ENCODE measurements at regions of chr1 and their contacts with region 1.

Region 1: GRCh38 chr1:241507189-241507863 is 12.2 kb downstream of the FH start:
- DNase-seq: no peak
- H3K4me3 Mint-ChIP-seq: no peak overlapping the region
- H3K27ac Mint-ChIP-seq: no peak overlapping the region
- H3K4me1 Mint-ChIP-seq: peaks cover 14% of the 10 kb centered on the region
- H3K27me3 Mint-ChIP-seq: no peaks in the 10 kb centered on the region

Region 2: GRCh38 chr1:241519308-241520079 is 12.2 kb after region 1 on chr1 and contains the start of gene FH:
- intact Hi-C with region 1: loop called (anchors 1 kb)
- DNase-seq: peak; percentile 91
- H3K4me3 Mint-ChIP-seq: peak within 1 kb of the TSS; percentile 91
- H3K27ac Mint-ChIP-seq: peak within 1 kb of the TSS; percentile 82
- H3K4me1 Mint-ChIP-seq: peaks cover 26% of the 10 kb centered on the region
- H3K27me3 Mint-ChIP-seq: peaks cover 26% of the 10 kb centered on the region
- total RNA-seq, gene FH: 94.5 and 101 TPM in 2 replicates